Activated T-helper 1 cell treated with anti-CD3 and anti-CD28 coated beads, Interleukin-12 subunit alpha, Interleukin-12 subunit beta, Interleukin-2, Interleukin-4 antibody, amounts not matched to agents 30 ng/mL and 10 ng/mL and 1 ng/mL, durations not matched to agents 14 hours and 24 hours and 36 hours (primary cell): ENCODE measurements at regions of chr2 and their contacts with region 1.

Region 1: DNA sequence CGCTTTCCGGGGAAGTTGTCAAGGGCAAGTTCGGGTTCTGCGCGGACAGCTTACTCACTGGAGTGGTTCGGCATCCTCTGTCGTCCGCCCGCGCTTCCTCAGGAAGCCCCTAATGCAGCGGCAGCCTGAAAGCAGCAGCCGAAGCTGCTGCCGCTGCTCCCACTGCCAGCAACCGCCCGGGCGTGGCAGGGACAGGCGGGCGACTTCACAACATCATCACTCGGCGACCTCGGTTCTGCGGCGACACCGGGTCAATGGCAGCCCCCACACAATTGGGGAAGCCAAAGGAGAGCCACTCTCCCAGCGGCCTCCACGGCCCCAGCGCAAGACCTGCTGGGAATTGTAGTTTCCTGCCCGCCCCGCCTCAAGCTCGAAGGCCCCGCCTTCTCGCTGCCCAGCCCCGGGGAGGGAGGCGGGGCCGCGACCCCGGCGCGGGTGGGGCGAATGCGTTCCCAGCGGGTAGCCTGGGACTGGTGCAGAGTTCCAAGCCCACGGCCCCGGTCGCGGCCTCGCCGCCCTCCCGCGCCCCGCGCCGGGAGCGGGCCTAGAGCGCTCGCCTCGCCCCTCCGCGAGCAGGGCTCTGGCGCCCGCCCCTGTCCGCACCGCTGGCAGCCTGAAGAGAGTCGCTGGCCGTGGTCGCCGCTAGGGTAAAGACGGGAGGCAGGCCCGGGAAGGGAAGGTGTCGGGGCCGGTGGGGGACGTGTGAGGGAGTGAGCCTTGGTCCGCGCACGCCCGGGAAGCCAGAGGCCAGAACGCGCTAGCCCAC is at the starts of genes STRADB and TRAK2:
- DNase-seq: peak; percentile 94
- H3K4me3 Mint-ChIP-seq: peak within 1 kb of the TSS; percentile 94
- H3K27ac Mint-ChIP-seq: peak within 1 kb of the TSS; percentile 93
- H3K4me1 Mint-ChIP-seq: peaks cover 43% of the 10 kb centered on the region
- H3K27me3 Mint-ChIP-seq: peaks cover 12% of the 10 kb centered on the region
- total RNA-seq, gene STRADB: 14.6 and 18.1 TPM in 2 replicates
- total RNA-seq, gene TRAK2: 24.7 and 28.9 TPM in 2 replicates

Region 2: GRCh38 chr2:200963124-200963917 is 488.2 kb before region 1 on chr2 and contains the start of gene ORC2:
- intact Hi-C with region 1: loop called (anchors 1 kb)
- DNase-seq: peak; percentile 93
- H3K4me3 Mint-ChIP-seq: peak within 1 kb of the TSS; percentile 97
- H3K27ac Mint-ChIP-seq: peak within 1 kb of the TSS; percentile 93
- H3K4me1 Mint-ChIP-seq: peaks cover 58% of the 10 kb centered on the region
- H3K27me3 Mint-ChIP-seq: no peaks in the 10 kb centered on the region
- total RNA-seq, gene ORC2: 63.1 and 63.3 TPM in 2 replicates

Region 3: DNA sequence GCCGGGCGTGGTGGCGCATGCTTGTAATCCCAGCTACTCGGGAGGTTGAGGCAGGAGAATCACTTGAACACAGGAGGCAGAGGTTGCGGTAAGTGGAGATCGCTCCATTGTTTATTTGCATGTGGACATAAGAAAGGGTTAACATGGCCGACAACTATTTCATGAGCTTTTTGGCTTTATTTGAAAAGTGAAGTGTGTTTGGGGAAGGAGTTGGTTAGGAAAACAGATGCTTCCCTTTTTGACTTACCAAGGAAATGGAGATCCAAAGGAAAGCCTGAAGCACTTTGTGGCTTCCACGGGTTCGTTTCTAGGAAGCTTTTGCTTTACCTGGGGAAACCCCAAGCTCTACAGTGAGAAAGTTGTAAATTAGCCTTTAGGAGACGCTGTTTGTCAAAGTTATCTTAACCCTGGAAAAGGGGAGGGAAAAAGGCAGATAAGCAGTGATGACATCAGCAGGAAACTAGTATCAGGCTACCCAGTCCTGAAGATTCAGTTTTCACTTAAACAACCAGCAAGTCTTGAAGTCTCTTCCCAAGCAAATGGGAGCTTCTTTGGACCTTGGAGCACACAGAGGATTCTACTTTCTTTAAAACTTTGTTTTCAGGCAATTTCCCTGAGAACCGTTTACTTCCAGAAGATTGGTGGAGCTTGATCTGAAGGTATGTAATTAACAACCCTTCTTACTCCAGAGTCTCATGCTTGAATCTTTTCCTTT is 268.7 kb before region 1 on chr2 and contains the start of gene CASP10:
- intact Hi-C with region 1: loop called (anchors 2 kb)
- DNase-seq: peak; percentile 48
- H3K4me3 Mint-ChIP-seq: peak within 1 kb of the TSS; percentile 96
- H3K27ac Mint-ChIP-seq: peak within 1 kb of the TSS; percentile 90
- H3K4me1 Mint-ChIP-seq: peaks cover 65% of the 10 kb centered on the region
- H3K27me3 Mint-ChIP-seq: peaks cover 4% of the 10 kb centered on the region
- total RNA-seq, gene CASP10: 13.5 and 15.7 TPM in 2 replicates

Region 4: GRCh38 chr2:201406077-201406662 is 45.3 kb before region 1 on chr2:
- intact Hi-C with region 1: loop called (anchors 1 kb)
- DNase-seq: no peak
- H3K4me3 Mint-ChIP-seq: no peak overlapping the region
- H3K27ac Mint-ChIP-seq: no peak overlapping the region
- H3K4me1 Mint-ChIP-seq: peaks cover 41% of the 10 kb centered on the region
- H3K27me3 Mint-ChIP-seq: no peaks in the 10 kb centered on the region

Region 5: GRCh38 chr2:201642579-201643215 is 191.2 kb after region 1 on chr2:
- intact Hi-C with region 1: loop called (anchors 1 kb)
- DNase-seq: peak; percentile 84
- H3K4me3 Mint-ChIP-seq: peak overlapping the region; percentile 89
- H3K27ac Mint-ChIP-seq: peak overlapping the region; percentile 92
- H3K4me1 Mint-ChIP-seq: peaks cover 18% of the 10 kb centered on the region
- H3K27me3 Mint-ChIP-seq: peaks cover 3% of the 10 kb centered on the region

Region 6: GRCh38 chr2:202238234-202239197 is 787.0 kb after region 1 on chr2 and contains the start of gene SUMO1:
- intact Hi-C with region 1: loop called (anchors 1 kb)
- DNase-seq: peak; percentile 89
- H3K4me3 Mint-ChIP-seq: peak within 1 kb of the TSS; percentile 98
- H3K27ac Mint-ChIP-seq: peak within 1 kb of the TSS; percentile 93
- H3K4me1 Mint-ChIP-seq: peaks cover 26% of the 10 kb centered on the region
- H3K27me3 Mint-ChIP-seq: peaks cover 4% of the 10 kb centered on the region
- total RNA-seq, gene SUMO1: 126 and 127 TPM in 2 replicates

Region 7: DNA sequence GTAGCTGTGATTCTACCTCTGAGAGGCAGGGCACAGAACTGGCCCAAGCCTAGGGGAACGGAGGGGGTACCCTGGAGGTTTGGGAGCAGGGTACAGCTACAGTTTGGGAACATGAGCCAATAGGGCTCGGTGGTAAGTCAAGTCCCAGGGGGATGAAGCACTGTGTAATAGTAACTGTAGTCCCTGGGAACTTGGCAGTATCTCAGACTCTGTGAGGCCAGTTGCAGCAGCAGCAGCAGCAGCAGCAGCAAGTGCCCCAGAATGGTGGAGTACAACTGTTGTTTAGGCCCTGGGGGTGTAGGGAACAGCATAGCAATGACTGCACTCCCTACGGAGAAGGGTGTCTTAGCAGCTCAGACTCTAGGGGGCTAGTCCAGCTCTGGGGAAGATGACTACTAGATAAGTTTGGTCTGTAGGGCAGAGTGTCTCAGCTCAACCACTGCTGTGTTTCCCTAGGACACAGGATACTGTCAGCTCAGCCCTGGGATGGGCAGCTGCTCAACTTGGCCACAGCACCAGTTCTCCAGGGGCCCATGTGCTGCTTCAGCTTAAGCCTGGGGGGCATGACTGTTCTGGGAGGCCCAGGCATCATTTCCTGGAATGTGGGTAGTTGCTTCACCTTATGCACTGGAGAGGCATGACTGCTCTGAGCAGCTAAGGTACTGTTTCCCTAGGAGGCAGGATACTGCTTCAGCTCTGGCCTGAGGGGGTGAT is 1481.1 kb after region 1 on chr2:
- intact Hi-C with region 1: no loop called
- DNase-seq: no peak
- H3K4me3 Mint-ChIP-seq: no peak overlapping the region
- H3K27ac Mint-ChIP-seq: no peak overlapping the region
- H3K4me1 Mint-ChIP-seq: no peaks in the 10 kb centered on the region
- H3K27me3 Mint-ChIP-seq: no peaks in the 10 kb centered on the region